ENCODE measurements at regions of chr5 and their contacts with region 1.

Region 1: GRCh38 chr5:44862808-44863207 is 54.1 kb downstream of the MRPS30 start:
- DNase-seq: no peak
- ATAC-seq: peak; percentile 33
- H3K4me3 Mint-ChIP-seq: no peak overlapping the region
- H3K27ac Mint-ChIP-seq: no peak overlapping the region
- H3K4me1 Mint-ChIP-seq: no peaks in the 10 kb centered on the region
- H3K27me3 Mint-ChIP-seq: peaks cover 7% of the 10 kb centered on the region

Region 2: DNA sequence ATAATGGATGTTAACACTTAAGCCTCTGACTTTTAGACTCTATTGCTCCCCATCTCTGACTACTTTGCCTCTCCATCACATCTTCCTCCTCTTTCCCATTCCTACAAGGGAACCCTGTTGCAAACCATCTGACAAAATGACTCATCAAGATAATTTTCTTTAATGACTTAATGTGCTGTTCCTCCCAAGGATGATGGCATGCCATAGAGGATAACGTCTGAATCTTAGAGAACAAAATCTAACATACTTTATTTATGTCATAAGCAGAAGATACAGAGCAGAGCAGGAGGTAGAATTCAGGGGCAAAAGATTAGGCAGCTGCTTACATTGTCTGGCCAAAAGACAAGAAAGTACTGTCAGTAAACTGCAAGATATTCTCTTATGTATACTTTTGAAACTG is 550.4 kb before region 1 on chr5:
- CTCF ChIA-PET with region 1: no interaction called
- POLR2A ChIA-PET with region 1: no interaction called
- intact Hi-C with region 1: no loop called
- DNase-seq: no peak
- ATAC-seq: no peak
- H3K4me3 Mint-ChIP-seq: no peak overlapping the region
- H3K27ac Mint-ChIP-seq: no peak overlapping the region
- H3K4me1 Mint-ChIP-seq: no peaks in the 10 kb centered on the region
- H3K27me3 Mint-ChIP-seq: no peaks in the 10 kb centered on the region

Region 3: GRCh38 chr5:44920411-44920810 is 57.6 kb after region 1 on chr5:
- CTCF ChIA-PET with region 1: interaction called, 4 read pairs
- POLR2A ChIA-PET with region 1: no interaction called
- intact Hi-C with region 1: loop called in 1 of 2 experiments (anchors 10 kb)
- DNase-seq: no peak
- ATAC-seq: no peak
- H3K4me3 Mint-ChIP-seq: no peak overlapping the region
- H3K27ac Mint-ChIP-seq: no peak overlapping the region
- H3K4me1 Mint-ChIP-seq: no peaks in the 10 kb centered on the region
- H3K27me3 Mint-ChIP-seq: no peaks in the 10 kb centered on the region

Measured in activated CD4-positive, alpha-beta T cell treated with anti-CD3 and anti-CD28 coated beads for 36 hours (primary cell).